OCI-LY7 (cell line): ENCODE measurements at regions of chr9 and their contacts with region 1.

Region 1: GRCh38 chr9:18296702-18297549 is 177.0 kb upstream of the ADAMTSL1 start:
- DNase-seq: no peak
- H3K4me3 ChIP-seq: no peak overlapping the region
- H3K27ac ChIP-seq: no peak overlapping the region
- H3K4me1 ChIP-seq: no peaks in the 10 kb centered on the region
- CTCF ChIP-seq: no peak

Region 2: GRCh38 chr9:18269561-18269960 is 27.4 kb before region 1 on chr9:
- CTCF ChIA-PET with region 1: no interaction called
- POLR2A ChIA-PET with region 1: no interaction called
- intact Hi-C with region 1: loop called (anchors 1 kb)
- DNase-seq: no peak
- H3K4me3 ChIP-seq: no peak overlapping the region
- H3K27ac ChIP-seq: no peak overlapping the region
- H3K4me1 ChIP-seq: no peaks in the 10 kb centered on the region
- CTCF ChIP-seq: no peak

Region 3: DNA sequence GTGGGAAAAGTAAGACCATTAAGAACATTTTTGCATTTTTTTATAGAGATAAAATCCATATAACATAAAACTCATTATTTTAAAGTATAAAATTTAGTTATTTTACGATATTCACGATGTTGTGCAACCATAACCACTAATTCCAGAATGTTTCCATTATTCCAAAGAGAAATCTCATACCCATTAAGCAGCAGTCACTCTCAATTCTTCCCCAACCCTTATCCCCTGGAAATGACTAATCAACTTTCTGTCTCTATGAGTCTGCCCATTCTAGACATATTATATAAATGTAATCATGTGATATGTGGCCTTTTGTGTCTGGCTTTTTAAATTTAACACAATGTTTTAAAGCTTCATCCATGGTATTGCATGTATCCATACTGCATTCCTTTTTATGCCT is 61.4 kb after region 1 on chr9:
- CTCF ChIA-PET with region 1: no interaction called
- POLR2A ChIA-PET with region 1: no interaction called
- intact Hi-C with region 1: no loop called
- DNase-seq: no peak
- H3K4me3 ChIP-seq: no peak overlapping the region
- H3K27ac ChIP-seq: no peak overlapping the region
- H3K4me1 ChIP-seq: peaks cover 25% of the 10 kb centered on the region
- CTCF ChIP-seq: no peak